Breast epithelium (tissue), 4 donors: ENCODE measurements at regions of chr18 and their contacts with region 1.

Region 1: GRCh38 chr18:44819944-44820510 is 139.3 kb downstream of the SETBP1 start:
- DNase-seq: no peak
- H3K4me3 ChIP-seq: no peak overlapping the region
- H3K27ac ChIP-seq: no peak overlapping the region
- H3K4me1 ChIP-seq: peaks cover 0 to 9% of the 10 kb centered on the region in 2 donors
- H3K27me3 ChIP-seq: no peaks in the 10 kb centered on the region
- CTCF ChIP-seq: no peak
- POLR2A ChIP-seq: no peak

Region 2: GRCh38 chr18:44411277-44411905 is 408.6 kb before region 1 on chr18:
- intact Hi-C with region 1: no loop called
- DNase-seq: no peak
- H3K4me3 ChIP-seq: no peak overlapping the region
- H3K27ac ChIP-seq: no peak overlapping the region
- H3K4me1 ChIP-seq: no peaks in the 10 kb centered on the region
- H3K27me3 ChIP-seq: no peaks in the 10 kb centered on the region
- CTCF ChIP-seq: no peak
- POLR2A ChIP-seq: no peak

Region 3: DNA sequence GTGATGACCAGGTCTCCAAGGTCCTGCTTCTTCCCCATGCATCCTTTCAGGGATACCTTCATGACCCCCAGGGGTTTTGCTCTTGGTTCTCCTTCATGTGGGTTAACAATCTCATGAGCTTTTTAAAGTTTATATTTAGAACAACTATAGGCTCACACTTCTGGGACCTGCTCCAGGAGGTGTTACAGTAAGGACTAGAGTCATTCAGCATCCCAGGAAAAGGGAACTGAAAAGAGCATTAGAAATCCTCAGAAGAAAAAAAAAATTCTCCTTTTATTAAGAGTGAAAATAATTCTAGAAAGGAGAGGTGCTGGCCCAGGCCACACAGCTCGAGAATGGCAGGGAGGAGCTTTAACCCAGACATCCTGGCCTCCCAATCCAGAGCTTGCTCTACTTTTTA is 72.9 kb before region 1 on chr18:
- intact Hi-C with region 1: loop called (anchors 2 kb)
- DNase-seq: no peak
- H3K4me3 ChIP-seq: no peak overlapping the region
- H3K27ac ChIP-seq: no peak overlapping the region
- H3K4me1 ChIP-seq: peaks cover 2 to 6% of the 10 kb centered on the region in 2 donors
- H3K27me3 ChIP-seq: no peaks in the 10 kb centered on the region
- CTCF ChIP-seq: no peak
- POLR2A ChIP-seq: no peak